Activated T-helper 1 cell treated with anti-CD3 and anti-CD28 coated beads, Interleukin-12 subunit alpha, Interleukin-12 subunit beta, Interleukin-2, Interleukin-4 antibody, amounts not matched to agents 30 ng/mL and 10 ng/mL and 1 ng/mL, durations not matched to agents 14 hours and 24 hours and 36 hours (primary cell): ENCODE measurements at regions of chr5 and their contacts with region 1.

Region 1: DNA sequence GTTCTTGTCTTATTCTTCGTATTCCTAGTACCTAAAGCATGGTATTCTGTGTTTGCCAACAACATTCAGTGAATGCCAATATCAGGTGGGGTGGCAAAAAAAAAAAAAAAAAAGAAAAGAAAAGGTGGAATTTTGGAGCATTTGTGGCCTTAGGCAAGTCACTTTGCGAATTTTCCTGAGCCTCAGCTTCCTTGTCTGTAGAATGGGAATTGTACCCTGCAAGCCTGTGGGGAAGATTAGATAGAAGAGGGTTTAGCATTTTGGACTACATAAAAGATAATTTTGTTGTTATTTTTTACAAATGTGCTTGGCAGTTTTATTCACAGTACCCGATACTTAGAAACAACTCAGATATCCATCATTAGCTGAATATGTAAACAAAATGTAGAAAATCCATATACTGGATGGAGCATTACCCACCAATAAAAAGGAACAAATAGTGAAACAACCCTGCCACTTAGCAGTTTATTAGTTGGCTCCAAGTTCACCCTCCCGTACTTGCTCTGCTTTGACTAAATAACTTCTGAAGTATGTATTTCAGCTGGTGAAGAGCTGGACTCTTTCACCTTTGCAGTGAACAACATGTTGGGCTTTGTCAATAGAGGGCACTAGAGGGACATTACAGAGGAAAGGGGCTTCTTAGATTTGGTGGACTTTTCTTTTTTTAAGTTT is 13.6 kb downstream of the UBE2D2 start:
- DNase-seq: no peak
- H3K4me3 Mint-ChIP-seq: no peak overlapping the region
- H3K27ac Mint-ChIP-seq: no peak overlapping the region
- H3K4me1 Mint-ChIP-seq: peaks cover 64% of the 10 kb centered on the region
- H3K27me3 Mint-ChIP-seq: no peaks in the 10 kb centered on the region

Region 2: GRCh38 chr5:138890644-138891043 is 684.1 kb before region 1 on chr5:
- intact Hi-C with region 1: no loop called
- DNase-seq: no peak
- H3K4me3 Mint-ChIP-seq: no peak overlapping the region
- H3K27ac Mint-ChIP-seq: no peak overlapping the region
- H3K4me1 Mint-ChIP-seq: no peaks in the 10 kb centered on the region
- H3K27me3 Mint-ChIP-seq: peaks cover 1% of the 10 kb centered on the region

Region 3: GRCh38 chr5:139439013-139439903 is 135.5 kb before region 1 on chr5 and contains the start of gene DNAJC18:
- intact Hi-C with region 1: loop called (anchors 5 kb)
- DNase-seq: peak; percentile 86
- H3K4me3 Mint-ChIP-seq: peak within 1 kb of the TSS; percentile 95
- H3K27ac Mint-ChIP-seq: peak within 1 kb of the TSS; percentile 99
- H3K4me1 Mint-ChIP-seq: peaks cover 66% of the 10 kb centered on the region
- H3K27me3 Mint-ChIP-seq: no peaks in the 10 kb centered on the region
- total RNA-seq, gene DNAJC18: 30.0 and 36.3 TPM in 2 replicates

Region 4: GRCh38 chr5:139611703-139612584 is 37.2 kb after region 1 on chr5:
- intact Hi-C with region 1: loop called (anchors 5 kb)
- DNase-seq: no peak
- H3K4me3 Mint-ChIP-seq: no peak overlapping the region
- H3K27ac Mint-ChIP-seq: peak overlapping the region; percentile 61
- H3K4me1 Mint-ChIP-seq: peaks cover 25% of the 10 kb centered on the region
- H3K27me3 Mint-ChIP-seq: no peaks in the 10 kb centered on the region

Region 5: DNA sequence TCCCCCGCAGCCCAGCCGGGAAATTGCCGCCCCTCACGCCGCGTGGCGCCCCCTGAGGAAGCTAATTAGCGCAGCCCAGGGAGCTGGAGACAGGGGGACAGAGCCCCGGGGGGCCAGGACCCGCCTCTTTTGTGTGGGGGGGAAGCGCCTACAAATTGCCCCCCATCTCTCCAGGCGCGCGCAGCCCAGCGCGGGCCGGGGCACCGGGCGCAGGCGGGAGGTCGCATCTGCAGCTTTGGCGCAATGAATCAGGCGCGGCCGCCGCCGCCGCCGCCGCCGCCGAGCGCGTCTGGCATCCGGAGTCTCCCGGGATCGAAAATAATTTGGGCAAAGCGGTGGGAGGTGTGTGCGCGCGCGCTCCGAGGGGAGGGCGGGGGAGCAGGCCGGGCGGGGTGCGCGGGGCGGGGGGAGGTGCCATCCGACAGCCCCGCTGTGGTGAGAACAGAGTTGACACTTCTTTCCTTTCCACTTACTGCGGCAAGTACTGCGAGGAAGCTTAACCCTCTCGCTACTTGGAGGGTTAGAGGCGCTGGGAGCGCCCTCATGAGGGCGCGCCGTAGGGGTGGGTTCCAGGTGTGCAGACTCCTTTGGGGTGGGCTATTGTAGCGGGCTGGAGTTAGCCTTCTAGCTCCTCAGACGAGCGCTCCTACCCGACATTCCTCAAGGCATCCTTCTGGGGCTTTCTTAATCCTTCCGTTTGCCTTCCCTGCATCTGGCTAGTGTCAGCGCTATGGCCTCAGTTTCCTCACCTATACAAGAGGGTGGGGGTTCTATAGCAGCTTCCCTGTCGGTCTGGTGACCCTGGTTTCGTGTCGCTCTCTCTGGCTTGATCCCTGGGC is 136.5 kb after region 1 on chr5:
- intact Hi-C with region 1: no loop called
- DNase-seq: peak; percentile 6
- H3K4me3 Mint-ChIP-seq: peak overlapping the region; percentile 54
- H3K27ac Mint-ChIP-seq: no peak overlapping the region
- H3K4me1 Mint-ChIP-seq: peaks cover 5% of the 10 kb centered on the region
- H3K27me3 Mint-ChIP-seq: peaks cover 50% of the 10 kb centered on the region

Region 6: DNA sequence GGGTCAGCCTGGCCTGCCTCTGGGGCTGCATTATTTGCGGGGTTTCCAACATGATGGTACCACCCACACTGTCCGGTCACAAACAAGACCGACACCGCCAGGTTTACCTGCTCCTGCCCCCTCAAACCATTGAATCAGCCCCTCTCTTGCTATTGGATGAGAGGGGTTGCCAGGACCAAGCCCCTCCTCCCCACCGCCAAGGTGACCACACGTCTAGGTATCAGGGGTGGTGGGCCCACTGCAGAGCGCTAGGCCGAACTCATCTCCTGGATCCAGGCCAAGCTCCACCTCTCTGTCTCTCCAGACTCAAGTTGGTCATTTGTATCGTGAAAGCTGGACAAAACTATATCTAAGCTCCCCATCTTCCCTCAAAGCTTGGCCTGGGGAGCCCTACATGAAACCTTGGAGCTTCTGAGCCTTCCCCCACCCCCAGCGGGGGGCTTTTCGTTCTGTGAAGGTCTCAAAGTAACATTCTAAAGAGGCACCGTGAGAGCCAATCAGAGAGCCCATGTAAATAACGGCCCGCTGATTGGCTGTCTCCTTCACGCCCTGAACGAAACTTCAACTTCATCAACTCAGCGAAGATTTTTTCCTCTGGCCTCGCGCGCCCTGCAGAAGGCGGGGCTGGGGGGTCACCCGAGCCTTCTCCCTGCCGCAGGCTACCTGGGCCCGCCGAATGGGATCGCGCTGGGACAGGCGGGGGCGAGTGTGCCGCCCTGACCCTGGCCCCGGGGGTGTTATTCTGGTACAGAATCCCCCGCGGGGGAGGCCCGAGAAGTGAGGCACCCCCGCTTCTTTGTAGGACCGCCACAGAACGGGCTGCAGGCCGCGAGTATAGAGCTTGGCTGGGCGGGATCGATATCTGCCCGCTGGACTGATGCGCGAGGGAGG is 171.3 kb after region 1 on chr5:
- intact Hi-C with region 1: loop called (anchors 2 kb)
- DNase-seq: peak; percentile 19
- H3K4me3 Mint-ChIP-seq: peak overlapping the region; percentile 85
- H3K27ac Mint-ChIP-seq: peak overlapping the region; percentile 26
- H3K4me1 Mint-ChIP-seq: peaks cover 24% of the 10 kb centered on the region
- H3K27me3 Mint-ChIP-seq: peaks cover 45% of the 10 kb centered on the region